HepG2 (cell line): ENCODE measurements at regions of chr3 and their contacts with region 1.

Region 1: DNA sequence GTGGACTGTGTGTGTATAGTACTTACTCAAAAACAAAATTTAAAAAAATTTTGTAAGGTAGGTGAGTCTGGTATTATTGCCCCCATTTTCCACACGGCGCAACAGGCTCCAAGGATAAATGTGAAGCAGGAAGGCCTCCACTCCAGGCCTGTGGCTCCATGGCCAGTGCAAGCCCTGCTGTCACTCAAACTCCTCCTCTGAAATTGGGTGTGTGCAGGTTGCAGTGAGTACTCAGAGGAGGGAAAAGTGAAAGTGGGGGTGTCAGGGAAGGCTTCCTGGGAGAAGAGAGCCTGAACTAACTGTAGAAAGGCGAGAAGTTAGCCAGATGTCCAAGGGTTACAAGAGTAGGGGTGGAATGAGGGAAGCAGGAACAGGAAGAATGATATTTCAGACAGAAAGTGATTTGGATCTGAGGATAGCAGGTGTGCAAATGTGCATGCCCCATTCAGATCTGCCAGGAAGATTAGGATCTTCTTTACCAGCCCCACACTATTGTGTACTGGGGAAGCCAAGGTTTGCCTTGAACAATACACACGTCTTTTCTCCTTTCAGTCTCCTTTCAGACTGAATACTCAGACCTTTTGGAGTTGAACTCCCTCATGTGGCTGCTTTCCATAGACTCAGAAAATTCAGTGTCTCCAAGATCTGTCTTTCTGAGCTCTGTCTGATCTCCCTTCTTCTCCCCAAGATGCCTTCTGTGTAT is 48.7 kb upstream of the RYK start:
- DNase-seq: no peak
- ATAC-seq: peak; percentile 74
- H3K4me3 ChIP-seq: peak overlapping the region in 1 of 3 experiments; percentile 39; a peak in 2 of 6 replicates
- H3K27ac ChIP-seq: no peak overlapping the region
- H3K4me1 ChIP-seq: peaks cover 10% of the 10 kb centered on the region; the same call in 1 of the 2 replicates
- H3K27me3 ChIP-seq: no peaks in the 10 kb centered on the region
- CTCF ChIP-seq: peak; percentile 55
- EP300 ChIP-seq: no peak
- POLR2A ChIP-seq: no peak
- RAD21 ChIP-seq: no peak

Region 2: GRCh38 chr3:134197681-134198261 is 101.6 kb before region 1 on chr3:
- CTCF ChIA-PET with region 1: interaction called, 3 read pairs
- POLR2A ChIA-PET with region 1: no interaction called
- in situ Hi-C with region 1: no loop called
- intact Hi-C with region 1: loop called (anchors 5 kb)
- DNase-seq: peak; percentile 48
- ATAC-seq: peak; percentile 86
- H3K4me3 ChIP-seq: no peak overlapping the region
- H3K27ac ChIP-seq: no peak overlapping the region
- H3K4me1 ChIP-seq: no peaks in the 10 kb centered on the region
- H3K27me3 ChIP-seq: no peaks in the 10 kb centered on the region
- CTCF ChIP-seq: peak; percentile 70
- EP300 ChIP-seq: no peak
- POLR2A ChIP-seq: no peak
- RAD21 ChIP-seq: no peak; the same call in 1 of the 2 replicates

Region 3: GRCh38 chr3:134212906-134213665 is 86.2 kb before region 1 on chr3:
- CTCF ChIA-PET with region 1: interaction called, 4 read pairs
- POLR2A ChIA-PET with region 1: no interaction called
- in situ Hi-C with region 1: loop called (anchors 5 kb)
- intact Hi-C with region 1: loop called (anchors 2 kb)
- DNase-seq: peak; percentile 66
- ATAC-seq: peak; percentile 97
- H3K4me3 ChIP-seq: no peak overlapping the region
- H3K27ac ChIP-seq: no peak overlapping the region
- H3K4me1 ChIP-seq: no peaks in the 10 kb centered on the region
- H3K27me3 ChIP-seq: no peaks in the 10 kb centered on the region
- CTCF ChIP-seq: peak; percentile 95
- EP300 ChIP-seq: no peak
- POLR2A ChIP-seq: no peak
- RAD21 ChIP-seq: peak; percentile 70

Region 4: GRCh38 chr3:134250717-134251220 is 48.6 kb before region 1 on chr3 and contains the start of gene RYK:
- CTCF ChIA-PET with region 1: no interaction called
- POLR2A ChIA-PET with region 1: no interaction called
- in situ Hi-C with region 1: no loop called
- intact Hi-C with region 1: loop called (anchors 5 kb)
- DNase-seq: peak; percentile 83
- ATAC-seq: peak; percentile 84
- H3K4me3 ChIP-seq: peak within 1 kb of the TSS; percentile 76 to 85 (median 79)
- H3K27ac ChIP-seq: peak within 1 kb of the TSS; percentile 74
- H3K4me1 ChIP-seq: peaks cover 61% of the 10 kb centered on the region
- H3K27me3 ChIP-seq: 0 out of 5 replicates have a peak, but pooled peaks cover 0 to 3% of the 10 kb centered on the region in 2 experiments
- CTCF ChIP-seq: no peak
- EP300 ChIP-seq: no peak
- POLR2A ChIP-seq: peak; percentile 56 to 83; a peak in 3 of 4 replicates
- RAD21 ChIP-seq: peak; percentile 32; the same call in 1 of the 2 replicates
- total RNA-seq, gene RYK: 58.7 and 66.2 TPM in 2 replicates

Region 5: DNA sequence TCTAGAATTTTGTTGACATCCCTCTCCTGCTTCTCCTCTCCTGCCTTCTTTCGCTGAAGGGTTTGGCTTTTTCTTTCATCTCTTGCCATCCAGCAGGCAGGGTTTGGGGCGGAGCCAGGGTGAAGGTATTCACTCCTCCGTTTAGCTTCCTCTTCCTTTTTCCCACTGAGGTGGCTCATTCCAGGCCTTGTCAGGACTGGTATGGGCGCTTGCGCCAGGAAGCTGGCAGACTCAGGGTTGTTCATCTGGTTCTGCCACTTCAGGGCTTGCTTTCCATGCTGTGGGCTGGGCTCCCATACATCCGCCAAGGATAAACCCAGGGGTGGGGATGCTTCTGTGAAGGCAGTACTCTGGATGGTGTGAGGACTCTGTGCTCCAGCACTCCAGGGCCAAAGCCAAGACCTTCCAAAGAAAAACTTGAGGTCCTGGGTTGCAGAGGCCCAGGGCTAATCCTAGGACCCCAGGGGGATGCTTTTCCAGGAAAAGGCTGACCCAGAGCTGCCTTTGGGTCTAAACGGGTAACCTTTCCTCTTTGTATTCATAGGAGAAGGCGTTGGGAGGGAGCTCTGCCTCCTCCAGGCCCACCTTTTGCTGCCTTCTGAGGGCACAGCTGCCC is 82.6 kb after region 1 on chr3:
- CTCF ChIA-PET with region 1: no interaction called
- POLR2A ChIA-PET with region 1: no interaction called
- in situ Hi-C with region 1: no loop called
- intact Hi-C with region 1: no loop called
- DNase-seq: no peak
- ATAC-seq: no peak
- H3K4me3 ChIP-seq: no peak overlapping the region
- H3K27ac ChIP-seq: no peak overlapping the region
- H3K4me1 ChIP-seq: peaks cover 15% of the 10 kb centered on the region
- H3K27me3 ChIP-seq: peaks cover 1 to 23% of the 10 kb centered on the region in 2 experiments; a peak in 3 of 5 replicates
- CTCF ChIP-seq: no peak
- EP300 ChIP-seq: no peak
- POLR2A ChIP-seq: no peak
- RAD21 ChIP-seq: no peak